ENCODE measurements at regions of chr1 and their contacts with region 1.

Region 1: DNA sequence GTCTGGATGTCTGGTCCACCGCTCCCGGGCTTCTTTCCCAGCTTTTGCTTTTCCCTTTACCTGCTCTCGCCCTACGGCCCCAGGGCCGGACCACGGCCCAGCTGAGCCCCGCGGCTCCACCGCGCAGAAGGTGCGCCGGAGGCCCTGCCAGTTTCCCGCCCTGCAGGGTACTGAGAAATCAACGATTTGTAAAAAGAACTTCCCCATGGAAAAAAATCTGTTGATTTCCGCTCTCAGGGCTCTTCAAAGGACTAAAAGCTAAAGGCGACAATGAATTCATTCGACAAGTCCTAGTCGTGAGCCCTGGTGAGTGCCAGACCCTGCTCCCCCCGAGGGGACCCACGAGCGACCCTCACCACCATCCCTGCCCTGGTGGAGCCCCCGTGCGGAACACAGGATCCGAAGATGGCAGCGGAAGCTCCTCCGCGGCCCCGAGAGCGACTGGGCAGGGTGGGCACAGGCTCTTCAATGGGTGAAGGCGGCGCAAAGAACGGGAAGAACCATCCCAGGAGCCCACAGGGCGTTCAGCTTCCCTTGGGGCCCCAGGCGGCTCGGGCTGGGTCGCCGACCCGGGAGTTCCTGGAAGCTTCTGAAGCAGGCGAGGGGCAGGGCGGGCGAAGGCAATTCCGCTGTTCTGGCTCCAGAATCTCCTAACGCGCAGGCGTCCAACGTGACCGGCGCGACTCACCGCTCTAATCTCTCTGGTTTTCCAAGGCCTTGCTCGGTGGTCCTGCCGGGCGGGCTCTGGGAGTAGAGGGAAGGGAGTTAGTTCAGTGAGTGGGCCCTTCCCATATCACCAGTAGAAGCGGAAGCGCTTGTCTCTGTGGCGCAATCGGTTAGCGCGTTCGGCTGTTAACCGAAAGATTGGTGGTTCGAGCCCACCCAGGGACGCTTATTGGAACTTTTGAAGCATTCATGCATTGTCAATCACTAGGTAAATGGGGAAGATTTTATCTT is 6.6 kb upstream of the RNU1-2 start:
- DNase-seq: peak; percentile 78
- ATAC-seq: peak; percentile 82
- H3K4me3 Mint-ChIP-seq: peak overlapping the region; percentile 82
- H3K27ac Mint-ChIP-seq: peak overlapping the region; percentile 82
- H3K4me1 Mint-ChIP-seq: peaks cover 8% of the 10 kb centered on the region
- H3K27me3 Mint-ChIP-seq: peaks cover 2% of the 10 kb centered on the region
- CTCF ChIP-seq: peak; percentile 35

Region 2: DNA sequence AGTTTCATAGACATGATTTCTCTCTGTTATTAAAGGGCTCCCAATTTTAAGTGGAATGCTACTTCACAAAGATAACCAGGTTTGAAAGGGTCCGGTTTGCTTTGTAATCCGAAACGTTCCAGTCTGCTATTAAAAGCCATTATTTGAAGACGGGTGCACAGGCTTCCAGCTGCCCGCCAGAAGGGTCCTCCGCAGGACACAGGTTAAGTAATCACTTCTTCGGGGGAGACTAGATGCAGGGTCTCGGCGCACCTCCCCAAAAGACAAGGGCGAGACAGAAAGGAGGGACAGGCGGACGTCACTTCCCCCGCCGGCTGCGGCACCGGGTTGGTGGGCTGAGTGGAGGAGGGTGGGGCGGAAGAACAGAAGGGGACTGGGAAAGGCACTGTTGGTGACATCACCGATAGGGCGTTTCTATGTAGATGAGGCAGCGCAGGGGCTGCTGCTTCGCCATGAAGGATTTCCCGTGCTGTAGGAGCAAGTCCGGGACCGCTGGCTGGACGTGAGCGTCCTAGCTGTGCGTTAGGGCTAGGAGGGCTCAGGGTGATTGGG is 15.5 kb after region 1 on chr1:
- CTCF ChIA-PET with region 1: no interaction called
- POLR2A ChIA-PET with region 1: interaction called, 10 read pairs
- intact Hi-C with region 1: no loop called
- DNase-seq: peak; percentile 98
- ATAC-seq: peak; percentile 95
- H3K4me3 Mint-ChIP-seq: no peak overlapping the region
- H3K27ac Mint-ChIP-seq: no peak overlapping the region
- H3K4me1 Mint-ChIP-seq: peaks cover 27% of the 10 kb centered on the region
- H3K27me3 Mint-ChIP-seq: no peaks in the 10 kb centered on the region
- CTCF ChIP-seq: no peak

Measured in activated CD8-positive, alpha-beta T cell treated with anti-CD3 and anti-CD28 coated beads for 36 hours (primary cell).